ENCODE measurements at regions of chr15 and their contacts with region 1.

Region 1: DNA sequence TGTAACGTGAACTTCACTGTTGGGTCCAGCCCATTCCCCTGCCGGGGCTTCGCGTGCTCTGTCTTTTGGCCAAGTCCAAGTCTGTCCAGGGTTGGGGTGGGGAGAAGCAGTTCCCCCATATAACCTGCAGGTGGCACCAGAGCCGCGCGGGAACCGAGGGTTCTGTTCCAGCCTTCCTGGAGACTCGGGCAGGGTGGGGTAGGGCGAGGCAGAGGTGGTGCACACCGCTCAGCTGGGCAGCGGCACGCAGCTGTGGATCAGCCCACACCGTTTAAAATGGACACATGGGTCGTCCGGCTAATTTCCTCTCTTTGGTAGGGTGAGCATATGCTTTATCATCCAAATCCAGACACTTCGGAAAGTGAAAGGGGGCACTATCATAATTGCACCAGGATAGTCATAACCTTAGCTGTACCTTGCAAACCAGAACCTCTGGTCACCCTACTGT is 118.1 kb downstream of the TBC1D2B start:
- DNase-seq: peak; percentile 81 to 94
- ATAC-seq: peak; percentile 95
- H3K4me3 ChIP-seq: no peak overlapping the region
- H3K27ac ChIP-seq: no peak overlapping the region
- H3K4me1 ChIP-seq: no peaks in the 10 kb centered on the region
- H3K27me3 ChIP-seq: no peaks in the 10 kb centered on the region

Region 2: GRCh38 chr15:78241007-78241406 is 281.6 kb after region 1 on chr15:
- intact Hi-C with region 1: loop called (anchors 5 kb)
- DNase-seq: peak; percentile 88 to 96
- ATAC-seq: peak; percentile 91
- H3K4me3 ChIP-seq: no peak overlapping the region
- H3K27ac ChIP-seq: no peak overlapping the region
- H3K4me1 ChIP-seq: no peaks in the 10 kb centered on the region
- H3K27me3 ChIP-seq: no peaks in the 10 kb centered on the region